PC-9 (cell line): ENCODE measurements at regions of chr19 and their contacts with region 1.

Region 1: GRCh38 chr19:45643024-45643926 is 4.1 kb upstream of the EML2 start:
- DNase-seq: peak; percentile 75 to 87
- H3K4me3 ChIP-seq: no peak overlapping the region
- H3K27ac ChIP-seq: peak overlapping the region; percentile 88; the same call in 1 of the 2 replicates
- H3K4me1 ChIP-seq: peaks cover 32% of the 10 kb centered on the region
- H3K27me3 ChIP-seq: no peaks in the 10 kb centered on the region
- CTCF ChIP-seq: peak; percentile 100

Region 2: DNA sequence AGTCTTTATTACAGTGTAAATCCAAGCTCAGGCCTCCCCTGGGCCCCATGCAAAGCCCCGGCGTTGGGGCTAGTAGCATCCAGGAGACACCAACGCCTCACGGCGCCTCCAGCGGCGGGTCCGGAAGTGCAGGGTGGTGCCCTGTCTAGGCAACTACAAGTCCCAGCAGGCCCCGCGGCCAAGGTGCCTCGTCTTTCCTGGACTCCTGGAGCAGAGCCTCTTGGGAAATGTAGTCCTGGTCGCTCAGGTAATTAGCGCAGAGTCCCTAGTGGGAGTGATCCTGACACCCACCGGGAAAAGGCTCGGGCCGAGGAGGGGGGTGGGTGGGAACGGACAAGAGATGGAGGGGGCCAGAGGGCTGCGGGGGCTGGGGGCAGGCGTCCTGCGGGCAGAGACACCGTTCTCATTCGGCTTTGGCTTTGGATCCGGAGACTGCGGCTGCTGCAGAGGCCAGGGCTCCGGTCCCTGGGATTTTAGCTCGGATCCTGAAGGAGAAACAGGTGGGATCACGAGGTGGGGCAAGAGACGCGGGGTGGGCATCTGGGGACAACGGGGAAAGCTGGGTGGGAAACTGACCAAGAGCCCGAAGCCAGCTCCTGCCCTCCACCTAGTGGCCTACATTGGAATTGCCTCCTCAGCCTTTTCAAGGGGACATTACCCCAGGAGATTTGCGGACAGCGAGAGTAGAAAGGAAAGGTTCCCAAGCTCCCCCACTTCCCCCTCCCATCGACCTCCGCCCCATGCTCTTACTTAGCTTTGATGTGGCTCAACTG is 157.8 kb before region 1 on chr19:
- CTCF ChIA-PET with region 1: interaction called, 4 read pairs
- POLR2A ChIA-PET with region 1: no interaction called
- intact Hi-C with region 1: loop called (anchors 2 kb)
- DNase-seq: peak; percentile 91 to 97
- H3K4me3 ChIP-seq: peak overlapping the region; percentile 62
- H3K27ac ChIP-seq: no peak overlapping the region
- H3K4me1 ChIP-seq: no peaks in the 10 kb centered on the region
- H3K27me3 ChIP-seq: no peaks in the 10 kb centered on the region
- CTCF ChIP-seq: peak; percentile 87

Region 3: DNA sequence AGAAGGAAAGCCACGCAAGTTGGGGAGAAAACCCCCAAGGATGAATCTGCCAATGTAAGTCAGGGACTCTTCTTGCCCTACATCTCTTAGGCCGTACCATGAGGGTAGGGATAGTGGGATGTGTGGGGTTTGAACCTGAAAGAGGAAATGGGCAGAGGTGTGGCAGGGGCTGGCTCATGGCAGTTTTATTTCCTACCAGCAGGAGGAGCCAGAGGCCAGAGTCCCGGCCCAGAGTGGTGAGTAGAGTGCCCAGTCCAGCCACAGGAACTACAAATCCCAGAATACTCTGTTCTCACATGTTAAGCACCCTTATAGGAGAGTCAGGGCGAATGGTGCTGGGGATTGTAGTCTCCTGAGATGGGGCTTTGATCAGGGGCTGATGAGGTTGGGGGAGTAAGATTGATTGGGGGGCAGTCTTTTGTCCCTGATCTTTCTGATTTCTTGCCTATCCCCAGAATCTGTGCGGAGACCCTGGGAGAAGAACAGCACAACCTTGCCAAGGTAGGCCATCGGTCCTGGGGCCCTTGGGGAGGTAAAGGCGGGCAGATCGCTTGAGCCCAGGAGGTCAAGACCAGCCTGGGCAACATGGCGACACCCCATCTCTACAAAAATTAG is 119.5 kb before region 1 on chr19:
- CTCF ChIA-PET with region 1: interaction called, 12 read pairs
- POLR2A ChIA-PET with region 1: no interaction called
- intact Hi-C with region 1: loop called (anchors 1 kb)
- DNase-seq: peak; percentile 75 to 81
- H3K4me3 ChIP-seq: no peak overlapping the region
- H3K27ac ChIP-seq: peak overlapping the region; percentile 17; the same call in 1 of the 2 replicates
- H3K4me1 ChIP-seq: peaks cover 36% of the 10 kb centered on the region
- H3K27me3 ChIP-seq: no peaks in the 10 kb centered on the region
- CTCF ChIP-seq: peak; percentile 98

Region 4: GRCh38 chr19:45591004-45591637 is 52.2 kb before region 1 on chr19:
- CTCF ChIA-PET with region 1: interaction called, 11 read pairs
- POLR2A ChIA-PET with region 1: interaction called, 7 read pairs
- intact Hi-C with region 1: no loop called
- DNase-seq: peak; percentile 30 to 62
- H3K4me3 ChIP-seq: no peak overlapping the region
- H3K27ac ChIP-seq: no peak overlapping the region
- H3K4me1 ChIP-seq: no peaks in the 10 kb centered on the region
- H3K27me3 ChIP-seq: no peaks in the 10 kb centered on the region
- CTCF ChIP-seq: peak; percentile 49

Region 5: GRCh38 chr19:45632468-45633196 is 10.6 kb before region 1 on chr19:
- CTCF ChIA-PET with region 1: interaction called, 12 read pairs
- POLR2A ChIA-PET with region 1: interaction called, 21 read pairs
- intact Hi-C with region 1: no loop called
- DNase-seq: peak; percentile 90 to 94
- H3K4me3 ChIP-seq: no peak overlapping the region
- H3K27ac ChIP-seq: peak overlapping the region; percentile 54
- H3K4me1 ChIP-seq: peaks cover 34% of the 10 kb centered on the region
- H3K27me3 ChIP-seq: no peaks in the 10 kb centered on the region
- CTCF ChIP-seq: no peak

Region 6: GRCh38 chr19:45681391-45682015 is 38.2 kb after region 1 on chr19:
- CTCF ChIA-PET with region 1: interaction called, 20 read pairs
- POLR2A ChIA-PET with region 1: interaction called, 8 read pairs
- intact Hi-C with region 1: loop called (anchors 1 kb)
- DNase-seq: peak; percentile 80 to 94
- H3K4me3 ChIP-seq: peak overlapping the region; percentile 53
- H3K27ac ChIP-seq: peak overlapping the region; percentile 31; the same call in 1 of the 2 replicates
- H3K4me1 ChIP-seq: peaks cover 18% of the 10 kb centered on the region
- H3K27me3 ChIP-seq: no peaks in the 10 kb centered on the region
- CTCF ChIP-seq: peak; percentile 94